ENCODE measurements at regions of chr2 and their contacts with region 1.

Region 1: DNA sequence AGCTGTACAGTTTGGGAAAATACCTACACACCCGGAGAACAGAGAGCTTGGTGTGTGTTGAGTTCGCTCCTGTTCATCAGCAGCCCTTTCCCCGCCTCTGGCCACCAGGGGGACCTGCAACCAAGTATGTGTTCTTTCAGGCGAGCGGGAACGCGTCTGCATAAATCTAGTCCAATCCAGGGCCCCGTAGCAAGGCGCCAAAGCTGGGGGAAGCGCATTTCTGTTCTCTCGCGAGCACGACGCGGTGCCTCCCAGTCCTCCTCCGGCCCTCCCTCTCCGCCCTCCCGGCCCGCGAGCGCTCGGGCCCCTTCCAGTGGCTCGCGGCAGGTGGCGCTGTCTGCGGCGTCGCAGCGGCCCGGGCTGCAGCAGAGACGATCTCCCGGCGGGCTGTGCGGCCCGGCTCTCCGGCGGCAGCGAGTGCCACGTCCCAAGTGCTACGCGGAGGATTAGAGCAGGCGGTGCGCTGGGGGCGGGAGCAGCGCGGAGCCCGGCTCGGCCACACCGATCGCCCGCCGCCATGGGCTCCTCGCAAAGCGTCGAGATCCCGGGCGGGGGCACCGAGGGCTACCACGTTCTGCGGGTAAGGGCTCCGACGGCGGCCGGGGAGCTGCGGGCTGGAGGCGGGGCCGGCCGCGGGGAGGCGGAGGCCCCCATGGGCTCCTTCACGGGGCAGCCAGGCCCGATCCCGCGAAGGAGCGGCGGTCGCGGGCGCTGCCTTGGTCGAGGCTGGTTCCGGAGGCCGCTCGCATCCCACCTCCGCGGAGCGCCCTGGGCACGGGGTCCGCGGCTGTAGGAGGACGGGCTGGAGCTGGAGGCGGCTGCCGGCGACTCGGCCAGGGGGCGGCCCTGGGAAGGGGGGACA is at the start of gene GORASP2:
- DNase-seq: peak; percentile 97
- H3K4me3 Mint-ChIP-seq: peak within 1 kb of the TSS; percentile 92
- H3K27ac Mint-ChIP-seq: peak within 1 kb of the TSS; percentile 92
- H3K4me1 Mint-ChIP-seq: peaks cover 45% of the 10 kb centered on the region
- H3K27me3 Mint-ChIP-seq: peaks cover 2% of the 10 kb centered on the region
- total RNA-seq, gene GORASP2: 99.5 and 104 TPM in 2 replicates

Region 2: DNA sequence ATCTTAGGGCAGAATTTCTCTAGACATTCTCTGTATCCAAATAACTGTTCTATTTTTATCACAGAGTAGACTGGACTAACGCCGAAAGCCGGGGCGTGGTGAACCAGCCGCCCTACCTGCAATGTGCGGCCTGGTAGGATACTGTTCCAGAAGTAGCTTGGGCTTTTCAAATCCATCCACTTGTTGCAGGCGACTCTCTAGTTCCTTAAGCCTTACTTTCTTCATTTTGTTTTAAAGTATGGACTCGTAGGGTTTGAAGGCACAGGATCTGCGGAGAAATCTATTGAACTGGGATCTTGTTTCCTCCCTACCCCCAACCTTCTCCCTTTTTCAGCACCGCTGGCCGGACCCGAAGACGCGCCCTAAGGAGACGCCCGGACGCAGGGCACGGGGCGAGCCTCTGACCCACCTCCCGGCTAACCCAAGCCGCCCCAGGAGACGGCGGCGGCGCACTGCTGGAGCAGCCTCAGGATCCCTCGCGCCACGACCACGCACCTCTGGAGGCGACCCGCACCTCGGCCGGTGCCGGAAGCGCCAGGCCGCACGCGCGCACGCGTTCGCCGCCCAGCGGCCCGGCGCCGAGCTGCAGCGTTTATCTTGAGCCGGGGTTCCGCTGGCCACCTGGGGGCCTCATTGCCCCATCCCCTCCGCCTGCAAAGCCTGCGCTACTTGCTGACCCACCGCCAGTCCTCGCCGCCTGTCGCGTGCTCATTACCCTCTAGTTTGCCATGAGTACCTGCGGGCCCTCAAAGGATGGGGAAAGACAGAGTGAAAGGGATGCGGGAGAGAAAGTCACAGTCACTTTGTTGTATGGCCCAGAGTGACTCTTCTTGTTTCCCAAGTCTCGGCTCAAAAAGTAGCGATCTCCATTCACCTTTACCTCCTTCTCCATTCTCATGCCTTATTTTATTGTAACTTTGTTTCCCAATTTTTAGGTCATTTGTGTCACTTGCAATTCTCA is 1104.4 kb before region 1 on chr2 and contains the start of gene METTL5:
- intact Hi-C with region 1: loop called (anchors 2 kb)
- DNase-seq: peak; percentile 79
- H3K4me3 Mint-ChIP-seq: peak within 1 kb of the TSS; percentile 93
- H3K27ac Mint-ChIP-seq: peak within 1 kb of the TSS; percentile 89
- H3K4me1 Mint-ChIP-seq: peaks cover 50% of the 10 kb centered on the region
- H3K27me3 Mint-ChIP-seq: no peaks in the 10 kb centered on the region
- total RNA-seq, gene METTL5: 92.0 and 92.1 TPM in 2 replicates

Region 3: GRCh38 chr2:170770606-170771420 is 158.2 kb before region 1 on chr2:
- intact Hi-C with region 1: loop called (anchors 2 kb)
- DNase-seq: peak; percentile 58
- H3K4me3 Mint-ChIP-seq: peak overlapping the region; percentile 83
- H3K27ac Mint-ChIP-seq: peak overlapping the region; percentile 55
- H3K4me1 Mint-ChIP-seq: peaks cover 7% of the 10 kb centered on the region
- H3K27me3 Mint-ChIP-seq: peaks cover 45% of the 10 kb centered on the region

Region 4: DNA sequence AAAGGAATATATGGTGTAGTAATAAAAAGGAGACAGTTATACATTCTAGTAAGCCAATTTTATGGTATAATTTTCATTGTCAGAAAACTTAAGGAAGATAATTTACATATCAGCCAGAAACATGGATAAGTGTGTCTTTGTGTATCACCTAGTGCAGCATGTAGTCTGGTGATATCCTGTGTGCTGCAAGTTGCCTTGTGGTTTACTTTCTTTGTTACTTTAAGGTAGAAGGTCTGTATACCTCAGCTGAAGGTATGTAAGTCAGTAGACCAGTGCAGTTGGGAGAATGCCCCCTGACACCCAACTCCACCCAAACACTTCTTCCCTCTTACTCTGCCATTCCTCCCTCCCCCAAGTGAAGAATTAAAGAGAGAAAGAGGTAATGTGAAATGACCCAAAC is 11.0 kb after region 1 on chr2:
- intact Hi-C with region 1: no loop called
- DNase-seq: no peak
- H3K4me3 Mint-ChIP-seq: no peak overlapping the region
- H3K27ac Mint-ChIP-seq: no peak overlapping the region
- H3K4me1 Mint-ChIP-seq: peaks cover 58% of the 10 kb centered on the region
- H3K27me3 Mint-ChIP-seq: no peaks in the 10 kb centered on the region

Region 5: GRCh38 chr2:171086352-171087290 is 157.6 kb after region 1 on chr2:
- intact Hi-C with region 1: loop called (anchors 2 kb)
- DNase-seq: peak; percentile 23
- H3K4me3 Mint-ChIP-seq: peak overlapping the region; percentile 77
- H3K27ac Mint-ChIP-seq: peak overlapping the region; percentile 82
- H3K4me1 Mint-ChIP-seq: peaks cover 52% of the 10 kb centered on the region
- H3K27me3 Mint-ChIP-seq: no peaks in the 10 kb centered on the region

Region 6: GRCh38 chr2:171433763-171434670 is 505.0 kb after region 1 on chr2 and contains the starts of genes DCAF17 and METTL8:
- intact Hi-C with region 1: loop called (anchors 1 kb)
- DNase-seq: peak; percentile 93
- H3K4me3 Mint-ChIP-seq: peak within 1 kb of the TSS; percentile 95
- H3K27ac Mint-ChIP-seq: peak within 1 kb of the TSS; percentile 98
- H3K4me1 Mint-ChIP-seq: peaks cover 28% of the 10 kb centered on the region
- H3K27me3 Mint-ChIP-seq: no peaks in the 10 kb centered on the region
- total RNA-seq, gene DCAF17: 23.9 and 24.9 TPM in 2 replicates
- total RNA-seq, gene METTL8: 31.8 and 36.4 TPM in 2 replicates

Region 7: DNA sequence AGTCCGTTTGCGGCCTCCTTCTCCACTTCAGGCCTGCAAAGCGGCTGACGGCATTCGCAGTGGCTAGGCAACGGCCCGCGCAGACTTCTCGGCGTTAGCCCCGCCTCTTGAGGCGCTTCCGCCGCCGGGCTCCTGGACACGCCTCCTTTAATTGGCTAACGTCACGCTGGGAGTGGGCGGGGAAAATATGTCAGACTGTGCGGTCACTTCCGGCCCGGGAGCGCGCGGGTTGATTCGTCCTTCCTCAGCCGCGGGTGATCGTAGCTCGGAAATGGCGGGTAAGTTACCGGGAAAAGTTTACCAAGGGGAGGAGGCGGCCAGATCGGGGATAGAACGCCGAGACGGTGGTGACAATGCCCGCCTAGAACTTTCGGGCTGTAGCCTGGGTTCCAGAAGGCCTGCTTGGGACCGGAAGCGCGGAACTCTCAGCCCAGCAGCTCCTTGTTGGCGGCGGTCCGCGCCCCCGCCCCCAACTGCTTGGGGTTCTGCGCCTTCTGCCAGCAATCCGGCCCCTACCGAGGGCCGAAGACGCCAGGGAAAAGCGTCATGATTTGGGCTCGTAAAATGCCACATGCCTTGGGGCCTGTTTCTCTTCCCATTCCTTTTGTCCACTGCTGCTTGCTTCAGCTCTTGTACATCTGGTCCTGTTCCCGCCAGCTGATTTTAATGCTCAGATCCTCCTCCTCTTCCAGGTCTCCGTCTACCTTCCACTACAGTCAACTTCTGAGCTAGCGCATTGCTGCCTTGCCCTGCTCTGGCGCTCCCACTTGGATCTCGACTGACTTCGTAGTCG is 993.4 kb after region 1 on chr2 and contains the start of gene HAT1:
- intact Hi-C with region 1: loop called (anchors 1 kb)
- DNase-seq: peak; percentile 97
- H3K4me3 Mint-ChIP-seq: peak within 1 kb of the TSS; percentile 98
- H3K27ac Mint-ChIP-seq: peak within 1 kb of the TSS; percentile 98
- H3K4me1 Mint-ChIP-seq: peaks cover 36% of the 10 kb centered on the region
- H3K27me3 Mint-ChIP-seq: peaks cover 2% of the 10 kb centered on the region
- total RNA-seq, gene HAT1: 68.2 and 73.1 TPM in 2 replicates

Region 8: DNA sequence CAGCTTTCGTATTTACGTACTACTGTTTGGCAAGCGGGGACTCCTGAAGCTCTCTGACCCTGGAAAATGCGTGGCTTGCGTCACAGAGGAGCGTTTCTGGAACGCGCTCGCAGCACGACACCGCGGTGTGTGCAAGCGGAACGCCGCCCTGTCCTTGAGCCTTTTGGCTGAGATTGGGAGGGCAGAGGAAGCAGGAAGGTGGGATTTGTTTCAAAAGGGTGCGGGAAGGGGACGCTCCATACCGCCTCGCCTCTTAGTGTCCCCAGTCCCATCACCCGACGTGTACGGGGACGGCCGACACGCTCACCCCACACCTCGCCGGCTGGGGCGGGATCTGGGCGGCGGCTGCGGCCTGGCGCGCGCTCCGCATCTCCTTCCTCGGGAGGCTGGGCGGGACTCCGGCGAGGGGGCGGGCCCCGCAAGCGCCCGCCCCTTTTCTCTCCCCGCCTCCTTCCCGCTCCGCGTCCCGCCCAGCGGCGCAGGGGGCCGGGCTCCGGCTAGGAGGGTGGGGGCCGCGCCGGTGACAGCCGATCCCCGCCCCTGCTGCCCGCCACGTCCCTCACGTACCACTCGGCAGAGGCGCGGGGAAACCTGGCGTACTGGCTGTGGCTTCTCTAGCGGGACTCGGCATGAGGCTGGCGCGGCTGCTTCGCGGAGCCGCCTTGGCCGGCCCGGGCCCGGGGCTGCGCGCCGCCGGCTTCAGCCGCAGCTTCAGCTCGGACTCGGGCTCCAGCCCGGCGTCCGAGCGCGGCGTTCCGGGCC is 1626.6 kb after region 1 on chr2 and contains the start of gene PDK1:
- intact Hi-C with region 1: loop called (anchors 1 kb)
- DNase-seq: peak; percentile 91
- H3K4me3 Mint-ChIP-seq: peak within 1 kb of the TSS; percentile 97
- H3K27ac Mint-ChIP-seq: peak within 1 kb of the TSS; percentile 98
- H3K4me1 Mint-ChIP-seq: peaks cover 65% of the 10 kb centered on the region
- H3K27me3 Mint-ChIP-seq: no peaks in the 10 kb centered on the region
- total RNA-seq, gene PDK1: 27.6 and 35.8 TPM in 2 replicates

Measured in activated T-helper 1 cell treated with anti-CD3 and anti-CD28 coated beads, Interleukin-12 subunit alpha, Interleukin-12 subunit beta, Interleukin-2, Interleukin-4 antibody, amounts not matched to agents 30 ng/mL and 10 ng/mL and 1 ng/mL, durations not matched to agents 14 hours and 24 hours and 36 hours (primary cell).